ENCODE measurements at regions of chr1 and their contacts with region 1.

Region 1: GRCh38 chr1:161201828-161202725 is at the start of gene NDUFS2:
- DNase-seq: peak; percentile 83 to 98 (median 94)
- ATAC-seq: peak; percentile 97 to 98
- H3K4me3 Mint-ChIP-seq: peak within 1 kb of the TSS; percentile 92 to 97 (median 94)
- H3K27ac Mint-ChIP-seq: peak within 1 kb of the TSS; percentile 95 to 99 (median 99)
- H3K4me1 Mint-ChIP-seq: peaks cover 32 to 83% (median 71%) of the 10 kb centered on the region in 4 donors
- H3K27me3 Mint-ChIP-seq: no peaks in the 10 kb centered on the region
- polyA plus RNA-seq, gene NDUFS2: 78.6 to 106 (median 95.4) TPM

Region 2: GRCh38 chr1:161098210-161099068 is 103.6 kb before region 1 on chr1 and contains the start of gene KLHDC9:
- POLR2A ChIA-PET with region 1: no interaction called
- DNase-seq: peak; percentile 33 to 79 (median 60)
- ATAC-seq: peak; percentile 71 to 78
- H3K4me3 Mint-ChIP-seq: peak within 1 kb of the TSS; percentile 83 to 96 (median 92)
- H3K27ac Mint-ChIP-seq: peak within 1 kb of the TSS; percentile 83 to 100 (median 88)
- H3K4me1 Mint-ChIP-seq: peaks cover 16 to 29% (median 25%) of the 10 kb centered on the region in 4 donors
- H3K27me3 Mint-ChIP-seq: peaks cover 0 to 4% (median 0%) of the 10 kb centered on the region in 5 donors
- polyA plus RNA-seq, gene KLHDC9: 0.30 to 1.5 (median 0.62) TPM

Region 3: DNA sequence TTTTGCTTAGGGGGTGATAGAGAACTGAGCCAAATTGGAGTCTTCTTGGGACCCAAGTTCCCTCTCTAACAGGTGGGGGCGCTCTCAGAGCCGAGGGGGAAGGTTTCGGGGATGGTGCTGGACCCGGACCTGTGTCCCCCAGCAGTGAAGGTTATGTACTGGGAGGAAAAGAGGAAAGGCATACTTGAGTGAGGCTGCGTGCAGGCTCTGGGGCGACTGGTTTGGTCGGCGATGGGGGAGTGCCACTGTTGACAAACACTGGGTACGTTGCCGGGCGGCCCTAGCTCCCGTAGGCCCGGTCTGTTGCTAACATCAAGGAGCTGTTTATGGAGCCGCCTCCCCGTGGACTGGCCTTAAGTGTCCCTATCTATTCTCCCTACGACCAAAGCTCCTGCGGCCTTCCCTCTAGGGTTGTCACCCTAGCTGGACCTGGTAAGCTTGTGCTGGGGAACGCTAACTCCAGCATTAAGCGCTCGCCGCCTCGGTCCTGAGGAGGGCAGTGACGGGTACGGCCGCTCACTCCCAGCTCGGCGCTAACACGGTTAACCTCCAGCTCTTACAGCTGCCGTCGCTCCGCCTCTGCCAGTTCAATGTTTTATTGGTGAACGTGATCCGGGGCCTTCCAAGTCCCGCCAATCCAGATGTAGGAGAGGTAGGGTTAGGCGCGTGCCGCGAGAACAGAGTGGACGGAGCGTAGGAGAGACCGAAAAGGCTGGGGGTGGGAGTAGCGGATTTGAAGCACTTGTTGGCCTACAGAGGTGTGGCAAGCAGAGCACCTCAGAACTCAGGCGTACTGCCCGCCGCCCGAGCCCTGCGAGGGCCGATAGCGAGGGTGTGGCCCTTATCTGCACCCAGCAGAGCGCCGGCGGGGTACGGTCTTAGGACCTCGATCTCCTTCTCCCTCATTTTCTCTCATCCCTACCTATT is 36.1 kb before region 1 on chr1 and contains the start of gene PPOX:
- POLR2A ChIA-PET with region 1: interaction called, 45 read pairs
- DNase-seq: peak; percentile 76 to 97 (median 92)
- ATAC-seq: peak; percentile 90 to 92
- H3K4me3 Mint-ChIP-seq: peak within 1 kb of the TSS; percentile 86 to 97 (median 92)
- H3K27ac Mint-ChIP-seq: peak within 1 kb of the TSS; percentile 97 to 100 (median 98)
- H3K4me1 Mint-ChIP-seq: peaks cover 29 to 66% (median 63%) of the 10 kb centered on the region in 4 donors
- H3K27me3 Mint-ChIP-seq: no peaks in the 10 kb centered on the region
- polyA plus RNA-seq, gene PPOX: 12.0 to 17.8 (median 15.7) TPM

Region 4: GRCh38 chr1:161185282-161185682 is 16.8 kb before region 1 on chr1:
- POLR2A ChIA-PET with region 1: interaction called, 90 read pairs
- DNase-seq: peak; percentile 50 to 92 (median 83)
- ATAC-seq: peak; percentile 72 to 89
- H3K4me3 Mint-ChIP-seq: peak overlapping the region; percentile 74 to 91 (median 88)
- H3K27ac Mint-ChIP-seq: peak overlapping the region; percentile 89 to 100 (median 94)
- H3K4me1 Mint-ChIP-seq: peaks cover 44 to 88% (median 82%) of the 10 kb centered on the region in 4 donors
- H3K27me3 Mint-ChIP-seq: no peaks in the 10 kb centered on the region

Region 5: GRCh38 chr1:161305867-161306519 is 103.9 kb after region 1 on chr1:
- POLR2A ChIA-PET with region 1: interaction called, 17 read pairs
- DNase-seq: peak; percentile 77 to 96 (median 91)
- ATAC-seq: peak; percentile 95 to 97
- H3K4me3 Mint-ChIP-seq: peak overlapping the region; percentile 92 to 100 (median 98)
- H3K27ac Mint-ChIP-seq: peak overlapping the region; percentile 90 to 99 (median 96)
- H3K4me1 Mint-ChIP-seq: peaks cover 14 to 44% (median 37%) of the 10 kb centered on the region in 4 donors
- H3K27me3 Mint-ChIP-seq: no peaks in the 10 kb centered on the region

Region 6: GRCh38 chr1:161389691-161390558 is 187.8 kb after region 1 on chr1:
- POLR2A ChIA-PET with region 1: interaction called, 13 read pairs
- DNase-seq: peak; percentile 90 to 98 (median 92)
- ATAC-seq: peak; percentile 89 to 92
- H3K4me3 Mint-ChIP-seq: peak overlapping the region; percentile 85 to 96 (median 92)
- H3K27ac Mint-ChIP-seq: peak overlapping the region; percentile 91 to 98 (median 97)
- H3K4me1 Mint-ChIP-seq: peaks cover 5 to 32% (median 23%) of the 10 kb centered on the region in 4 donors
- H3K27me3 Mint-ChIP-seq: no peaks in the 10 kb centered on the region